Activated T-helper 1 cell treated with anti-CD3 and anti-CD28 coated beads, Interleukin-12 subunit alpha, Interleukin-12 subunit beta, Interleukin-2, Interleukin-4 antibody, amounts not matched to agents 30 ng/mL and 10 ng/mL and 1 ng/mL, durations not matched to agents 14 hours and 24 hours and 36 hours (primary cell): ENCODE measurements at regions of chr12 and their contacts with region 1.

Region 1: DNA sequence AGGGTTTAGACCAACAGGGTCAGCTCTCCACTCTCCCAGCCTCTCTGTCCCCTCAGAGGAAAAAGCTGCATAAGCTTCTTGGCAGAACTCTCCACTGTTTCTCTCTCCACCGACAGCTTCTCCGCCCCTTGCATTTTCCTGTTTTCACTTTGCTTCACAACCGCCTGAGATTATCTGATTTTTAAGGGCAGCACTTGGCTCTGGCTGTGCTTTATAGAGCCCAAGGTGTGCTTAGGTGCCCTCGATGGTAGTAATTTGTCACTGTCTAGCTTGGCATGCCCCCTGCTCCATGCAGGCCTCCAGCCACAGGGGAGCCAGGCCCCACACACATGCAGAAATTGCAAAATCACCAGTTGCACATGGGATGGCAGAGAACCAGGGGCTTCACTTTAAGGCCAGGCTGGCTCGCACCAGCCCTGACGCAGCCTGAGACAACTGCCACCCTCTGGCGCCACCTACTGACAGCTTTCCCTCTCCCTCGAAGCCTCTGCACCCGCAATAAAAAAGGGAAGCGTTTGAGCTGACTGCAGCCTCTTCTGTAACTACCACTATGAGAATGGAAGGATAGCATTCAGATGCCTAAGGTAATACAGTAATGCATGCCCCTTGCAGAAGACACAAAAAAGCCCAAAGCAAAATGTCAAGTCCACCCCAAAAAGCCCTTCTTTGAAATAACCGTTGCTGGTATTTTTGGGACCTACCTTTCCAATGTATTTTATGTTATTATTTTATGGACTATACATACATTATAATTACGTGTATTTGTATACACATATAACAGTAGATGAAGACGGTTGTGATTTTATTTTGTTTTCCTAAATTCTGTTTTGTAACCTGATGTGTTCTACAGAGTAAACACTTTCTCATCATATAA is 32.0 kb upstream of the RIMBP2 start:
- DNase-seq: peak; percentile 47
- H3K4me3 Mint-ChIP-seq: no peak overlapping the region
- H3K27ac Mint-ChIP-seq: no peak overlapping the region
- H3K4me1 Mint-ChIP-seq: no peaks in the 10 kb centered on the region
- H3K27me3 Mint-ChIP-seq: peaks cover 7% of the 10 kb centered on the region

Region 2: GRCh38 chr12:130041983-130042812 is 705.9 kb before region 1 on chr12:
- intact Hi-C with region 1: loop called (anchors 5 kb)
- DNase-seq: no peak
- H3K4me3 Mint-ChIP-seq: no peak overlapping the region
- H3K27ac Mint-ChIP-seq: no peak overlapping the region
- H3K4me1 Mint-ChIP-seq: no peaks in the 10 kb centered on the region
- H3K27me3 Mint-ChIP-seq: peaks cover 12% of the 10 kb centered on the region

Region 3: DNA sequence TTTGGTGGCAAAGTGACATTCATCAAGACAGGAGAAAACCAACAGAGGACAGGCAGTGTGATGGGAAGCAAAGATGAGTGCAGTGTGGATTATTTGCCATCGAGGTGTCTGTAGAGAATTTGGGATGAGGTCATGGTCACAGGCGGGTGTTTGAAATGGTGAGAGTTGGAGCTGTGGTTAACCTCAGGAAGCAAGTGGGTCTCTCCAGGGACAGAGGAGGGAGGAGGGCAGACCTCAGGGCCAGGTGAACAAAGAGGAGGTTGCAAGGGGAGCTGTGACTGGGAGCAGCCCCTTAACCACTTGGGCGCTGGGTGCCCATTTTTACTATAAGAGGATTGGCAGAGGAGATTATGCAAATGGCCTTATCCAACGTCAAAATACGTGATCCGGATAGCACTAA is 578.8 kb before region 1 on chr12:
- intact Hi-C with region 1: no loop called
- DNase-seq: no peak
- H3K4me3 Mint-ChIP-seq: no peak overlapping the region
- H3K27ac Mint-ChIP-seq: no peak overlapping the region
- H3K4me1 Mint-ChIP-seq: no peaks in the 10 kb centered on the region
- H3K27me3 Mint-ChIP-seq: peaks cover 21% of the 10 kb centered on the region

Region 4: GRCh38 chr12:130281153-130281799 is 466.8 kb before region 1 on chr12:
- intact Hi-C with region 1: loop called (anchors 5 kb)
- DNase-seq: peak; percentile 9
- H3K4me3 Mint-ChIP-seq: no peak overlapping the region
- H3K27ac Mint-ChIP-seq: no peak overlapping the region
- H3K4me1 Mint-ChIP-seq: no peaks in the 10 kb centered on the region
- H3K27me3 Mint-ChIP-seq: peaks cover 2% of the 10 kb centered on the region

Region 5: GRCh38 chr12:131353821-131354220 is 605.7 kb after region 1 on chr12:
- intact Hi-C with region 1: no loop called
- DNase-seq: no peak
- H3K4me3 Mint-ChIP-seq: no peak overlapping the region
- H3K27ac Mint-ChIP-seq: no peak overlapping the region
- H3K4me1 Mint-ChIP-seq: no peaks in the 10 kb centered on the region
- H3K27me3 Mint-ChIP-seq: no peaks in the 10 kb centered on the region